AG04450 (cell line): ENCODE measurements at regions of chr7 and their contacts with region 1.

Region 1: DNA sequence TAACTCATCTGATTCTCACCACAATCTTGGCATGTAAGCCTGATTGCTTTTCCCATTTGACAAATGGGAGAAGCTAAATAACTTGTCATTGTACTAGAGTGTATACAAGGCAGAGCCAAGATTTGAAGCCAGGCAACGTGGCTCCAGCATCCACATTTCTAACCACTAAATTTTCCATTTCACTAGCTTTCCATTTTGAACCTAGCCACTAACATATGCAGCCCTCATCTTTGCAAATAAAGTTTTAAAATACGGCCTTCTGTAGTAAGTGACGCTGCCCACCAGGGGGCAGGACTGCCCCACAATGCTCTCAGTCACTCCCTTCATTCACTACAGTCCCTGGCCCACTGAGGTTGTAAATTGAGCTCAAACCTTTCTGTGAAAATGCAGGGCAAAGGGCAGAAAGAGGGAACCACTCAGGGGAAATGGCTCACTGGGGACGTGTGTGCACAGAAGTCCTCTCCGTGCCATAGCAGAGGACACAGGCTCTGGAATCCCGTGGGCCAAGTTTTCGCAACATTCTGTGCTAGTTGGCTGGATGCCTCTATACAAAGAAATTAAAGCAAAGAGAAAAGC is 315.7 kb downstream of the TNS3 start:
- DNase-seq: peak; percentile 20
- H3K4me3 ChIP-seq: no peak overlapping the region
- H3K27ac ChIP-seq: no peak overlapping the region
- H3K27me3 ChIP-seq: no peaks in the 10 kb centered on the region
- CTCF ChIP-seq: peak; percentile 94

Region 2: DNA sequence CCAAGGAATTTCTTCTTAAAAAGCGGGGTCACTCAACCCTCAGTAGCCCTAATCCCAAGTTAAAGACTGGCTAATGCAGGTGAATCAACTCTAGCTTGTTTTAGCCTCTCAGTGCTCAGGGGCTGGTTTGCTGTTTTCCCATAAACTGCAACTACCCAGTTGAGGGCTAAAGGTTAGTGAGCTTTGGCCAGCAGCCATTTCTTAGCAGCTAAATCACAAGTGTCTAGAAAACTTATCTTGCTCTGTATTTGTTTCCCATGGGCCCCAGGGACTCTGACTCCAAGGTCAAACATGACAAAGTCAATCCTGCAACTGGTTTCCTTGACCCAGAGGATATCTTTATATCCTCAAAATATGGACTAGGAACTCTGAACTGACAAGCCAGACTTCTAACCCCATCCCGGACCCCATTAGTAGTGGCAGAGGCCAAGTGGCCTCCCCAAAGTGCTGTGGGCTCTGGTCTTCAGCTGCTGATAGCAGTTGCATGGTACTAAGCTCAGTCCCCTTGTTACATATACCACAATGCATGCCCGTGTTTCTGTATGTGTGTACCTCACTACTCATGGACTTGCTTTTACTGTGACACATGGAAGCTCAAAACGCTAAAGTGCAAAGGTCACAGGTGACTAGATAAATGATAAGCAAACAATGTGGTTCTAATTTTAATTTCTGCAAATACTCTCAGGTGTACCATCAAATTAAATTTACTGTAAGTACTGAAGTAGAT is 552.2 kb before region 1 on chr7:
- CTCF ChIA-PET with region 1: no interaction called
- POLR2A ChIA-PET with region 1: no interaction called
- DNase-seq: no peak
- H3K4me3 ChIP-seq: no peak overlapping the region
- H3K27ac ChIP-seq: no peak overlapping the region
- H3K27me3 ChIP-seq: no peaks in the 10 kb centered on the region
- CTCF ChIP-seq: no peak

Region 3: GRCh38 chr7:47254081-47255006 is 11.9 kb before region 1 on chr7:
- CTCF ChIA-PET with region 1: interaction called, 50 read pairs
- POLR2A ChIA-PET with region 1: no interaction called
- DNase-seq: no peak
- H3K4me3 ChIP-seq: peak overlapping the region; percentile 70
- H3K27ac ChIP-seq: peak overlapping the region; percentile 61
- H3K27me3 ChIP-seq: no peaks in the 10 kb centered on the region
- CTCF ChIP-seq: peak; percentile 55

Region 4: GRCh38 chr7:47337531-47337930 is 71.3 kb after region 1 on chr7:
- CTCF ChIA-PET with region 1: interaction called, 13 read pairs
- POLR2A ChIA-PET with region 1: no interaction called
- DNase-seq: no peak
- H3K4me3 ChIP-seq: no peak overlapping the region
- H3K27ac ChIP-seq: peak overlapping the region; percentile 12
- H3K27me3 ChIP-seq: no peaks in the 10 kb centered on the region
- CTCF ChIP-seq: no peak

Region 5: GRCh38 chr7:47408675-47409074 is 142.5 kb after region 1 on chr7:
- CTCF ChIA-PET with region 1: interaction called, 13 read pairs
- POLR2A ChIA-PET with region 1: no interaction called
- DNase-seq: no peak
- H3K4me3 ChIP-seq: no peak overlapping the region
- H3K27ac ChIP-seq: no peak overlapping the region
- H3K27me3 ChIP-seq: no peaks in the 10 kb centered on the region
- CTCF ChIP-seq: no peak

Region 6: DNA sequence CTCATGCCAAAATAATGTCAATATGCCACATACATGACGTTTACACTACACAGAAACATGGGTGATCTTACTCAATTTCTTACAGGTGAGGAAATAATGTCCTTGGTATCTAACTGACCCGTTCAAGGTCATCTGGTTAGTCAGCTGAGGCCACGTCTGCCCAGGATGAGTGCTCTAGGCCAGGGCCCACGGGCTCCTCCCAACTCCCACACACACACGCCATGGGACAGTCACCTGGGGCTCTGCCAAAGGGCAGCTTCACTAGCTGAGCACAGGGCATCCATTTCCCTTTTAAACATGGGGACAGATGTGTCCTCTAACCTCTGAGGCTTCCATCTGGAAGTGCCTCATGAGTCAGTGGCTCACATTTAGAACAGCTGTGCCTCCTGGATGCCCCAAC is 191.8 kb after region 1 on chr7:
- CTCF ChIA-PET with region 1: interaction called, 14 read pairs
- POLR2A ChIA-PET with region 1: no interaction called
- DNase-seq: peak; percentile 91
- H3K4me3 ChIP-seq: no peak overlapping the region
- H3K27ac ChIP-seq: peak overlapping the region; percentile 85
- H3K27me3 ChIP-seq: no peaks in the 10 kb centered on the region
- CTCF ChIP-seq: no peak

Region 7: GRCh38 chr7:47945261-47946001 is 679.2 kb after region 1 on chr7:
- CTCF ChIA-PET with region 1: interaction called, 23 read pairs
- POLR2A ChIA-PET with region 1: no interaction called
- DNase-seq: no peak
- H3K4me3 ChIP-seq: no peak overlapping the region
- H3K27ac ChIP-seq: no peak overlapping the region
- H3K27me3 ChIP-seq: no peaks in the 10 kb centered on the region
- CTCF ChIP-seq: peak; percentile 75